Activated B cell treated with CpG ODN at 0.5 μM for 24 hours (primary cell): ENCODE measurements at regions of chr16 and their contacts with region 1.

Region 1: DNA sequence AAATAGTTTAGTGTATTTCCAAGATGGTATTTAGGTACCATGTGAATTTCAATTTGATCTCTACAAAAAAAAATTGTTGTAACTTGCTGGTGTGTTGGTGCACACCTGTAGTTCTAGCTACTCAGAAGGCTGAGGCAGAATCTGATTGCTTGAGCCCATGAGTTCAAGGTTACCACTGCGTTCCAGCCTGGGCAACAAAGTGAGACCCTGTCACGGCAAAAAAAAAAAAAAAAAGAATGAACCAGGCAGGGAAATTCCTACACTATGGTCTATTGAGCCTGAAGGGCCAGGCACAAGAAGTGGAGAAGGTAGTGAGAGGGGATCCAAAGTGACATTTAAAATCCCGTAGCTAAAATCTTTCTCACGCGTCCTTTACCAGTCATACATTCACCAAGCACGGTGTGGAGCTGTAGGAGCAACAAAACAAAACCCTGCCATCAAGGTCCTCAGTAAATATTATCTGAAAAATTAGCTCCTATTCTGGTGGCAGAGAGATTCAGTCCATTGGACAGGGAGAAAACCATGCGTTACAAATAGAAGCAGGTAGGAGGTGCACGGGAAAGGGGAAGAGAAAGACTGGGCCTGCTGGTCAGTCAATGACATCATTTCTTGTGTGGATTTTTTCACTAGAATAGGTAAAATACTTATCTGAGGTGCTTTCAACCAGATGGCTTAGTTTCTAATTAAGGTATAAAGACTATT is 27.3 kb downstream of the TXNDC11 start:
- DNase-seq: no peak
- ATAC-seq: peak; percentile 29
- H3K4me3 Mint-ChIP-seq: no peak overlapping the region
- H3K27ac Mint-ChIP-seq: peak overlapping the region; percentile 50
- H3K4me1 Mint-ChIP-seq: peaks cover 36% of the 10 kb centered on the region
- H3K27me3 Mint-ChIP-seq: no peaks in the 10 kb centered on the region
- CTCF ChIP-seq: no peak

Region 2: GRCh38 chr16:10957771-10958486 is 757.5 kb before region 1 on chr16:
- CTCF ChIA-PET with region 1: interaction called, 26 read pairs
- POLR2A ChIA-PET with region 1: interaction called, 3 read pairs
- intact Hi-C with region 1: loop called (anchors 2 kb)
- DNase-seq: no peak
- ATAC-seq: peak; percentile 61
- H3K4me3 Mint-ChIP-seq: peak overlapping the region; percentile 42
- H3K27ac Mint-ChIP-seq: peak overlapping the region; percentile 59
- H3K4me1 Mint-ChIP-seq: peaks cover 67% of the 10 kb centered on the region
- H3K27me3 Mint-ChIP-seq: no peaks in the 10 kb centered on the region
- CTCF ChIP-seq: no peak

Region 3: GRCh38 chr16:11407047-11407982 is 308.1 kb before region 1 on chr16:
- CTCF ChIA-PET with region 1: interaction called, 19 read pairs
- POLR2A ChIA-PET with region 1: no interaction called
- intact Hi-C with region 1: loop called (anchors 1 kb)
- DNase-seq: no peak
- ATAC-seq: peak; percentile 74
- H3K4me3 Mint-ChIP-seq: no peak overlapping the region
- H3K27ac Mint-ChIP-seq: no peak overlapping the region
- H3K4me1 Mint-ChIP-seq: no peaks in the 10 kb centered on the region
- H3K27me3 Mint-ChIP-seq: no peaks in the 10 kb centered on the region
- CTCF ChIP-seq: no peak

Region 4: GRCh38 chr16:11535471-11535870 is 179.9 kb before region 1 on chr16:
- CTCF ChIA-PET with region 1: interaction called, 49 read pairs
- POLR2A ChIA-PET with region 1: no interaction called
- intact Hi-C with region 1: loop called (anchors 1 kb)
- DNase-seq: no peak
- ATAC-seq: no peak
- H3K4me3 Mint-ChIP-seq: no peak overlapping the region
- H3K27ac Mint-ChIP-seq: no peak overlapping the region
- H3K4me1 Mint-ChIP-seq: no peaks in the 10 kb centered on the region
- H3K27me3 Mint-ChIP-seq: no peaks in the 10 kb centered on the region
- CTCF ChIP-seq: no peak

Region 5: DNA sequence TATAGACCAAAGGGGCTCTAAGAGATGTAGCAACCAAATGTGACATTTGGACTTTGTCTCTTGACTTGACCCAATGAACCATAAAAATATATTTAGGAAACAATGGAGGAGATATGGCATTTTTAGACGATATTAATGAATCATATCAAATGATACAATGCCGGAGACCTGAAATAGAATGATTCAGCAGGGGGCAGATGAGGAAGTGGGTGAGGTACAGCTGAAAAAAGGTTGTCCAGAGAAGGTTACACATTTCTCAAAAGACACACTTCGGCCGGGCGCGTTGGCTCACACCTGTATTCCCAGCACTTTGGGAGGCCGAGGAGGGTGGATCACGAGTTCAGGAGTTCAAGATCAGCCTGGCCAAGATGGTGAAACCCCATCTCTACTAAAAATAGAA is 63.6 kb before region 1 on chr16:
- CTCF ChIA-PET with region 1: interaction called, 3 read pairs
- POLR2A ChIA-PET with region 1: interaction called, 9 read pairs
- intact Hi-C with region 1: loop called (anchors 2 kb)
- DNase-seq: no peak
- ATAC-seq: no peak
- H3K4me3 Mint-ChIP-seq: no peak overlapping the region
- H3K27ac Mint-ChIP-seq: no peak overlapping the region
- H3K4me1 Mint-ChIP-seq: peaks cover 14% of the 10 kb centered on the region
- H3K27me3 Mint-ChIP-seq: no peaks in the 10 kb centered on the region
- CTCF ChIP-seq: no peak

Region 6: GRCh38 chr16:11797166-11797956 is 82.0 kb after region 1 on chr16 and contains the start of gene ZC3H7A:
- CTCF ChIA-PET with region 1: interaction called, 12 read pairs
- POLR2A ChIA-PET with region 1: interaction called, 6 read pairs
- intact Hi-C with region 1: no loop called
- DNase-seq: peak; percentile 94
- ATAC-seq: peak; percentile 97
- H3K4me3 Mint-ChIP-seq: peak within 1 kb of the TSS; percentile 95
- H3K27ac Mint-ChIP-seq: peak within 1 kb of the TSS; percentile 96
- H3K4me1 Mint-ChIP-seq: peaks cover 73% of the 10 kb centered on the region
- H3K27me3 Mint-ChIP-seq: no peaks in the 10 kb centered on the region
- CTCF ChIP-seq: no peak
- total RNA-seq, gene ZC3H7A: 143 and 163 TPM in 2 replicates